Sigmoid colon (tissue), 7 donors: ENCODE measurements at regions of chr9 and their contacts with region 1.

Region 1: DNA sequence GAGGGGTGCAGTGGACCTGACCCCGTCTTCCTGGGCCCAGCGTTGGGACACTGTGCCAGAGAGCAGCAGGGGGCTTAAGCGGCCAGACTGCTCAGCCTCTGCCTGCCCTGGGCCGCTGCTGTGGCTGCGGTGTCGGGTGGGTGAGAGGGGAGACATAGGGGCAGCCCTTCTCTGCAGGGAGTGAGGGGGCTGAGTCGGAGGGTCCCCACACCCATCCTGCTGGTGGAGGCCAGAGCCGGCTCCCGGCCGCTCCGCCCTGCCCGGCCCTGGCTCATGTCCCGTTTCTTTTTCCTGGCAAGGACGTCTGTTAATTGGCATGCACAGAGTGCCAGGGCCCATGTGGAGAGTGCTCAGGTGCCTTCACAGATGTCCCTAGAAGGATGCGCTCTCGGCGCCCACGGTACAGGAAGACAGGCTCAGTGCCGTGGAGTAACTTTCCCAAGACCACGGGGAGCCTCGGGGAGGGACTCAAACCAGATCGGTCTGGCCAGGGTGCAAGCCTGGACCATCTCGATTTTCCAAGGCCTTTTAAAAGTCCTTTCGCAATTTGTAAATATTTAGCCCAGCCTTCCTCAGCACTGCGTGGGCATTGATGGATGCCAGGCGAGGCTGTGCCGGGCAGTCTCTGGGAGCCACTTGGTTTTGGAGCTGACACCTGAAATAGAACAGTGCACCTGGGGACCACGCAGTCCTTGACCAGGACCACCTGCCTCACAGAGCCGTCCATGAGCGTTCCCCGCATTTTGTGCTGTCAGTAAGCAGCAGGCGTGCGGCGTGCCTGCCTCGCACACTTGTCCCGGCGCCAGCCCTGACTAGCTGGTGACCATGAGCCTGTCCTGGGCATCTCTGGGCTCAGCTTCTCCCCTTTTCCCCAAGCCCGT is 60.9 kb downstream of the RXRA start:
- DNase-seq: peak; percentile 95
- H3K4me3 ChIP-seq: no peak overlapping the region
- H3K27ac ChIP-seq: peak overlapping the region; percentile 79 to 88 (median 81)
- H3K4me1 ChIP-seq: peaks cover 0 to 100% (median 94%) of the 10 kb centered on the region in 4 donors
- H3K27me3 ChIP-seq: no peaks in the 10 kb centered on the region
- CTCF ChIP-seq: no peak
- EP300 ChIP-seq: peak in 2 of 4 donors; percentile 65 to 87
- POLR2A ChIP-seq: no peak

Region 2: DNA sequence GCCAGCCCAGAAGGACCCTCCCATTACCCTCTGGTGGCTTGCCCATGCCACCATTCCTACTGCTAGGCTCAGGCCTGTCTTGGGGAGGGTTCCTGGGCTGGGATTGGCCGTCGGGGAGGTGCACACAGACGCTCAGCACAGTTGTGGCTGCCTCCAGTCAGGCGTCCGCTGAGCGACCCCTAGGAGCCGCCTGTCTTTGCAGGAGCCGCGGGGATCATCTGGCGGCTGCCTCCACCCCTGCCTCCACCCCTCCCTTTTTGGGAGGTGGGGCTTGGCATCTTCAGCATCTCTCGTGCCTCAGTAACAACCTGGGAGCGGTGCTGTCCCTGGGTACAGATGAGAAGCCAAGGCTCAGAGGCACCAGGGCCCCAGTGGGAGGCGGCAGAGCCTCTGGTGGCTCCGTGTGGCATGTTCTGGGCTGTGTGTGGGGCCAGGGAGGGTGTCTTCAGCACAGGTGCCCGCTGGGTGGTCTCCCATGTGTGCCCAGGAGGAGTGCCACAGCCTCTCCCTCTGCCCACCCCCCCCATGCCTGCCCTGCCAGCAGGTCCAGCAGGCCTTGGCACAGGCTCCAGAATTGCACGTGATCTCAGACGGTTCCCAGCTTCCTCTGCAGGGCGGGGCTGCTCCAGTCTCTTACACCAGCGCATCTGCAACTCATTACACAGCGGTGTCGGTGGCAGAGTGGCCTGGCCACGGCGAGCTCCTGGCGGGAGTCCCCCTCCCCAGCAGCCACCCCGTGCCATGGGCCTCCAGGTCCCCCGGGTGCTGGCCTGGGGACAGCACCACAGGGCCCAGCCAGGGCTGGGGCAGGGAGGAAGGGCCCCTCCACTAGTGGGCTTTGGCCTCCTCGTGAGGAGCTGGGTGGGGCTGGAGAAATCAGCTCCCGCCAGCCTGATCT is 21.2 kb before region 1 on chr9:
- intact Hi-C with region 1: no loop called
- DNase-seq: peak; percentile 98
- H3K4me3 ChIP-seq: peak overlapping the region in 3 of 4 donors; percentile 8 to 30 (median 27)
- H3K27ac ChIP-seq: peak overlapping the region; percentile 83 to 87 (median 84)
- H3K4me1 ChIP-seq: peaks cover 0 to 67% (median 62%) of the 10 kb centered on the region in 4 donors
- H3K27me3 ChIP-seq: no peaks in the 10 kb centered on the region
- CTCF ChIP-seq: peak in 1 of 4 experiments; percentile 13
- EP300 ChIP-seq: peak in 1 of 4 donors; percentile 33
- POLR2A ChIP-seq: peak; percentile 45 to 74

Region 3: GRCh38 chr9:134407123-134407808 is 20.1 kb after region 1 on chr9:
- intact Hi-C with region 1: loop called (anchors 2 kb)
- DNase-seq: peak; percentile 96
- H3K4me3 ChIP-seq: peak overlapping the region in 3 of 4 donors; percentile 26 to 32 (median 31)
- H3K27ac ChIP-seq: peak overlapping the region; percentile 54 to 78 (median 69)
- H3K4me1 ChIP-seq: peaks cover 0 to 99% (median 93%) of the 10 kb centered on the region in 4 donors
- H3K27me3 ChIP-seq: no peaks in the 10 kb centered on the region
- CTCF ChIP-seq: no peak
- EP300 ChIP-seq: peak in 1 of 4 donors; percentile 25
- POLR2A ChIP-seq: no peak

Region 4: GRCh38 chr9:134413890-134414731 is 26.9 kb after region 1 on chr9:
- intact Hi-C with region 1: loop called (anchors 2 kb)
- DNase-seq: peak; percentile 96
- H3K4me3 ChIP-seq: no peak overlapping the region
- H3K27ac ChIP-seq: peak overlapping the region; percentile 70 to 78 (median 76)
- H3K4me1 ChIP-seq: peaks cover 0 to 80% (median 71%) of the 10 kb centered on the region in 4 donors
- H3K27me3 ChIP-seq: no peaks in the 10 kb centered on the region
- CTCF ChIP-seq: no peak
- EP300 ChIP-seq: peak in 2 of 4 donors; percentile 48 to 82
- POLR2A ChIP-seq: no peak

Region 5: GRCh38 chr9:134434894-134435506 is 47.8 kb after region 1 on chr9:
- intact Hi-C with region 1: loop called (anchors 1 kb)
- DNase-seq: peak; percentile 99
- H3K4me3 ChIP-seq: peak overlapping the region in 3 of 4 donors; percentile 14 to 24 (median 24)
- H3K27ac ChIP-seq: peak overlapping the region; percentile 87 to 93 (median 90)
- H3K4me1 ChIP-seq: peaks cover 0 to 77% (median 72%) of the 10 kb centered on the region in 4 donors
- H3K27me3 ChIP-seq: no peaks in the 10 kb centered on the region
- CTCF ChIP-seq: no peak
- EP300 ChIP-seq: peak in 2 of 4 donors; percentile 79 to 82
- POLR2A ChIP-seq: no peak

Region 6: DNA sequence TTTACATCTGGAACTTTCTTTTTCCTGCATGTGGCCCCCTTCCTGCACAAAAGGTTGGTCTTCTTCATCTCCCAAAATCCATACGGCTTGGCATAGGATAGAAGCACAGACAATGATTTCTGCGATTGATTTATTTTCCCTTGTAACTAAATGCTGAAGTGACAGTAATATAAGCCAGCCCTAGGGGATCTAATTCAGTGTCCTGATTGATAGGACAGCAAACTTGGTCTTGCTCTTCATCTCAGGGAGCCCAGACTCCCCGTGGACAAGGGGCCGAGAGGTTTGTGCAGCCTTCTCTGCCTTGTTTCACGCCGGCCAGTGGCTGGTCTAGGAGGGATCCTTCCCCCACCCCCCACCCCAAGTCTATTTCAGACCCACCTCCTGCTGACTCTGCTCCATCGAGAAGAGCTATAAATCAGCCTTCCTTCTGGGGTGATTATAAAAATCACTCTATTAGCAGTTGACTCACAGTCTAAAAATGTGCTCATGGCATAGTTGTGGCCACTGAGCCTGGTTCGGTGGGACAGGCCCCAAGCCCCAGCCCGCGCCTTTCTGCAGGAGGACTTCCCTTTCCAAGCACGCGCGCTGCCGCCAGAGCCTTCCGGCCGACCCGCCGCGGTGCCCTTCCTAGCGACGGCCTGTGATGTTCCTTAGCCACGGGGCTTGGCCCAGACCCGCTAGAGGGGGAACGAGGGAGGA is 164.6 kb after region 1 on chr9:
- intact Hi-C with region 1: no loop called
- DNase-seq: no peak
- H3K4me3 ChIP-seq: no peak overlapping the region
- H3K27ac ChIP-seq: peak overlapping the region in 1 of 4 donors; percentile 14
- H3K4me1 ChIP-seq: peaks cover 0 to 14% (median 3%) of the 10 kb centered on the region in 4 donors
- H3K27me3 ChIP-seq: no peaks in the 10 kb centered on the region
- CTCF ChIP-seq: no peak
- EP300 ChIP-seq: no peak
- POLR2A ChIP-seq: no peak